ENCODE measurements at regions of chr1 and their contacts with region 1.

Region 1: DNA sequence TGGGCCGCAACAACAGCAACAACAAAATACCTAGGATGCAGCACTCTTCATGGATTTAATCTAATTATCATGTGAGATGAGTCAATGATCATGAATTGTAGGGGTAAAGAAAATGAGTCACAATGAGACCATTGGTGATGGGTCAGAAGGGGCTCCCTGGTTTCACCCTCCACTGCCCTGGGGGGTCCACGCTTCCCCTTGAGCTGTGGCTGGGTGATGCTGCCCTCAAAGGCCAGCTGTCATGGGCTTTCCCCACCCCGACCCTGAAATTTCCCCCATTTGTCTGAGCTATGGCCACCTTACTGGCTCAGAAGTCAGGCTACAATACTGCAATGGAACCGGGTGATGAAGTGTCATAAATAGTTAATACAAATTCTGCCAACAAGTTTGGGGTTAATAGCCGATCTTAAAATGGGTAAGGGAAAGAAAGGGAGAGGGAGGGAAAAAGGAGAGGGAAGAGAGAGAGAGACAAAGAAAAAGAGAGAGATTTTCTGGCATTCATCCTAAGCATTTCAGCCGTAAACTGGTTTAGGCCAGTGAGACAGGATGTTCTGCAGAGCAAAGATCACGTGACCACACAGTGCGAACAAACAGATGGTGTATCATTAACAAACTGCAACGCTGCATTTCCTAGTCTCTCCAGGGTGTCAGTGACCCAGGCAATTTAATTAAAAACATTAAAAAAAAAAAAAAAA is 143.4 kb upstream of the ERRFI1 start:
- DNase-seq: peak; percentile 72 to 82
- H3K4me3 ChIP-seq: no peak overlapping the region
- H3K4me3 Mint-ChIP-seq: peak overlapping the region; percentile 53
- H3K27ac Mint-ChIP-seq: peak overlapping the region; percentile 91
- H3K4me1 ChIP-seq: peaks cover 27% of the 10 kb centered on the region
- H3K4me1 Mint-ChIP-seq: peaks cover 11% of the 10 kb centered on the region
- H3K27me3 ChIP-seq: no peaks in the 10 kb centered on the region
- H3K27me3 Mint-ChIP-seq: no peaks in the 10 kb centered on the region
- CTCF ChIP-seq: no peak

Region 2: DNA sequence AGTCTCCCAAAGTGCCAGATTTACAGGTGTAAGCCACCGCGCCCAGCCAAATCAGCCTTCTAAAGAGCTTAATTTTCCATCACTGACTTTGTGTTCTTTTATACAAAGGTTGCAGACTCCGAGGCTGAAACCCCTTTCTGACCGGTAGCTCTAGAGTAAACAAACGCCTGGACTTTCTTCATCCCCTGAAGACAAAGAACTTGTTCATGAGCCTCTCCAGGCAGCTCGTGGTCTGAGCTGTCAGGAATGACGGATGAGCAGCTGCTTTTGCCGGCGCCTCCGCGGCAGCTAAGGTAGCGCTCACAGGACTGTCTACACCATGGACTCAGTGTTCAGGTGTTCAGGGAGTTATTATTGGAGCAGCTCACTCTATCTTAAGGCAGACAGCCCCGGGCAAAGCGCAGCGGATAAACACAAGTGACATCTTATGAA is 14.9 kb before region 1 on chr1:
- CTCF ChIA-PET with region 1: interaction called, 4 read pairs
- POLR2A ChIA-PET with region 1: no interaction called
- intact Hi-C with region 1: loop called (anchors 1 kb)
- DNase-seq: peak; percentile 84 to 92
- H3K4me3 ChIP-seq: no peak overlapping the region
- H3K4me3 Mint-ChIP-seq: peak overlapping the region; percentile 60
- H3K27ac Mint-ChIP-seq: peak overlapping the region; percentile 83
- H3K4me1 ChIP-seq: peaks cover 15% of the 10 kb centered on the region
- H3K4me1 Mint-ChIP-seq: peaks cover 10% of the 10 kb centered on the region
- H3K27me3 ChIP-seq: no peaks in the 10 kb centered on the region
- H3K27me3 Mint-ChIP-seq: no peaks in the 10 kb centered on the region
- CTCF ChIP-seq: no peak

Region 3: DNA sequence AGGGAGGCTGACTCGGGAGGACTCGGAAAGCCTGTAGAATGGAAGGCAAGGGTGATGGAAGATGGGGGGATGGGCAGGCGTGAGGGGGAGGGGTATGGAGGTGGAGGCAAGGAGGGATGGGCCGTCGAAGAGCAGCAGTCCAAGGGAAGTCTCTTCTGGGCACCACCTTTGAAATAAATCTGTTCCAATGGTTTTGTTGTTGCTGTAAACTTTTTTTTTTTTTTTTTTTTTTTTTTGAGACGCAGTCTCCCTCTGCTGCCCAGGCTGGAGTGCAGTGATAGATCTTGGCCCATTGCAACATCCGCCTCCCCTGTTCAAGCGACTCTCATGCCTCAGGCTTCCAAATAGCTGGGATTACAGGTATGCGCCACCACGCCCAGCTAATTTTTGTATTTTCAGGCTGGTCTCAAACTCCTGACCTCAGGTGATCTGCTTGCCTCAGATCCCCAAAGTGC is 69.4 kb after region 1 on chr1:
- CTCF ChIA-PET with region 1: no interaction called
- POLR2A ChIA-PET with region 1: interaction called, 11 read pairs
- intact Hi-C with region 1: no loop called
- DNase-seq: peak; percentile 73 to 85
- H3K4me3 ChIP-seq: no peak overlapping the region
- H3K4me3 Mint-ChIP-seq: peak overlapping the region; percentile 27
- H3K27ac Mint-ChIP-seq: peak overlapping the region; percentile 72
- H3K4me1 ChIP-seq: peaks cover 28% of the 10 kb centered on the region
- H3K4me1 Mint-ChIP-seq: peaks cover 27% of the 10 kb centered on the region
- H3K27me3 ChIP-seq: no peaks in the 10 kb centered on the region
- H3K27me3 Mint-ChIP-seq: no peaks in the 10 kb centered on the region
- CTCF ChIP-seq: no peak